CD8-positive, alpha-beta T cell (primary cell): ENCODE measurements at regions of chr3 and their contacts with region 1.

Region 1: GRCh38 chr3:46998121-46998851 is 18.8 kb downstream of the NBEAL2 start:
- DNase-seq: peak; percentile 57 to 87 (median 77)
- ATAC-seq: peak; percentile 66
- H3K4me3 ChIP-seq: no peak overlapping the region
- H3K4me3 Mint-ChIP-seq: no peak overlapping the region
- H3K27ac ChIP-seq: no peak overlapping the region
- H3K27ac Mint-ChIP-seq: peak overlapping the region; percentile 45
- H3K4me1 ChIP-seq: peaks cover 13% of the 10 kb centered on the region
- H3K4me1 Mint-ChIP-seq: peaks cover 17% of the 10 kb centered on the region
- H3K27me3 ChIP-seq: no peaks in the 10 kb centered on the region
- H3K27me3 Mint-ChIP-seq: no peaks in the 10 kb centered on the region
- CTCF ChIP-seq: peak; percentile 80

Region 2: DNA sequence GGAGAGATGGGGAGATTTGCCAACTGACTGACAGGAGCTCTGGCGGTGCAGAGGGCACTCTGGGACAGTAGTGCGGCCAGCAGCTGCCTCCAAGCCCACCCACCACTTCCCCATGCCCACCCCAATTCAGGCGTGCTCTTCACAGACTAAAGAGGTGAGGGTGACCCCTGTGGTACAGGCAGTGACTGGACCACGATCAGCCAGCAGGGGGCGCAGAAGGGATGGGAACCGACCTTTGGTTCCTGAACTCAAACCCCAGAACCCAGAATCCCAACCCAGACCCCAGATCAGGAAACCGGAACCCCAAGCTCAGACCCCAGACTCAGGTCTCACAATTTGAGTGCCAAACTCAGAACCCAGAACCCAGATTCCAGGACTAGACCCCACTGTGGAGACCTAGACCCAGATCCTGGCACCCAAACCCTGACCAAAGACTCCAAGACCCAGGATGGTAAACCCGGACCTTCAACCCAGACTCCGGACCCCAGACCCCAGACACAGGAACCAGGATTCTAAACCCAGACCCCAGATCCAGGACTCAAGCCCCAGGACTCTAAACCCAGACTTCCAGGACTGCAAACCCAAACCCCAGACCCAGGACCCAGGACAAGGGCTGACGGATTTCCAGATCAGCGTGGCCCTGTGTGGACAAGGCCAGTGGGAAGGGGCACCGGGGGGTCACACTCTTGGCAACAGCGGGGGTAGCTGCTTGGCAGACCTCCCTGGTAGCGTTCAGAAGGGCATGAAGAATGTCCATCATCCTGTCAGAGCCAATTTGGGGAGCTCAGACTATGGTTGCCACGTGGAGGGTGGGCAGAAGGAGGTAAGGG is 131.4 kb before region 1 on chr3:
- CTCF ChIA-PET with region 1: interaction called, 11 read pairs
- POLR2A ChIA-PET with region 1: no interaction called
- intact Hi-C with region 1: loop called in 1 of 2 experiments (anchors 1 kb)
- DNase-seq: peak; percentile 57 to 93 (median 79)
- ATAC-seq: peak; percentile 80
- H3K4me3 ChIP-seq: no peak overlapping the region
- H3K4me3 Mint-ChIP-seq: no peak overlapping the region
- H3K27ac ChIP-seq: no peak overlapping the region
- H3K27ac Mint-ChIP-seq: no peak overlapping the region
- H3K4me1 ChIP-seq: no peaks in the 10 kb centered on the region
- H3K4me1 Mint-ChIP-seq: no peaks in the 10 kb centered on the region
- H3K27me3 ChIP-seq: no peaks in the 10 kb centered on the region
- H3K27me3 Mint-ChIP-seq: no peaks in the 10 kb centered on the region
- CTCF ChIP-seq: peak; percentile 75

Region 3: DNA sequence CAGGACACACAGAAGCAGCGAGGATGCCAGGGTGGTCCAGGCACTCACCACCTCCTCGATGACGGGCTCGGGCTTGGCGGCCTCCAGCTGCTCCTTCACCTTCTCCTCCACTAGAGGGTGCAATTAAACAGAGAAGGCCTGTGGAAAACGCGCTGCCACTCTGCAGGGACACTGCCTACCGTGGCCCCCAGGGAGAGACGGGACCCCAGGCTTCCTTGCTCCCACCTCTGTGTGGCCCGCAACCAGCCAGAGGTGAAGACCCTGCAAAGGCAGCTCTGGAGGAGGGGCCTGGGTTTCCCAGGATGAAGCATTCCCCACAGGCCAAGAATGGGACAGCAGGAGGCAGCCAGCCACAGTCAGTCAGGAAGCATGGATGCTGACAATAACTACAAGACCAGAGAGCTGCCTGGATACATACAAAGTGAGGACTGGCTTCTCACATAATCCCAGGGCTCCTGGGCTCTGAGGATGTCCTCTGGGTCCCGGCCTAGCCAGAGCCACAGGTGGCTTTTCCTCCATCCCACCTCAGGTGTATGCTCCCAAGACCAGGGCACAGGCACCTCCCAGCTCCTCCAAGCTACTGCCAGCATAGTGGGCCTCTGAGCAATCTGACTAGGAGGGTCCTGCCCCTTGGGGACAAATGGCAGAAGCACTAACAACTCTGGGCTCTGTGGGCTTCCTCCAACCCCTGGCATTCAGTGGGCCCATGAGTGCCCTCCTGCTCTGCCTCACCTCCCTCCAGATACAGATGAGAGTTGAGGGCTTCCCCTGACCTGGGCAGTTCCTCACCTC is 74.5 kb before region 1 on chr3:
- CTCF ChIA-PET with region 1: interaction called, 63 read pairs
- POLR2A ChIA-PET with region 1: no interaction called
- intact Hi-C with region 1: loop called (anchors 1 kb)
- DNase-seq: peak in 7 of 9 experiments; percentile 16 to 61 (median 48)
- ATAC-seq: peak; percentile 63
- H3K4me3 ChIP-seq: no peak overlapping the region
- H3K4me3 Mint-ChIP-seq: no peak overlapping the region
- H3K27ac ChIP-seq: no peak overlapping the region
- H3K27ac Mint-ChIP-seq: peak overlapping the region; percentile 77
- H3K4me1 ChIP-seq: peaks cover 28% of the 10 kb centered on the region
- H3K4me1 Mint-ChIP-seq: peaks cover 29% of the 10 kb centered on the region
- H3K27me3 ChIP-seq: no peaks in the 10 kb centered on the region
- H3K27me3 Mint-ChIP-seq: no peaks in the 10 kb centered on the region
- CTCF ChIP-seq: peak; percentile 46

Region 4: GRCh38 chr3:46947981-46948791 is 50.1 kb before region 1 on chr3:
- CTCF ChIA-PET with region 1: interaction called, 5 read pairs
- POLR2A ChIA-PET with region 1: no interaction called
- intact Hi-C with region 1: loop called in 1 of 2 experiments (anchors 1 kb)
- DNase-seq: peak; percentile 53 to 91 (median 79)
- ATAC-seq: peak; percentile 76
- H3K4me3 ChIP-seq: no peak overlapping the region
- H3K4me3 Mint-ChIP-seq: peak overlapping the region; percentile 33
- H3K27ac ChIP-seq: peak overlapping the region; percentile 39 to 77
- H3K27ac Mint-ChIP-seq: peak overlapping the region; percentile 97
- H3K4me1 ChIP-seq: peaks cover 78% of the 10 kb centered on the region
- H3K4me1 Mint-ChIP-seq: peaks cover 83% of the 10 kb centered on the region
- H3K27me3 ChIP-seq: no peaks in the 10 kb centered on the region
- H3K27me3 Mint-ChIP-seq: no peaks in the 10 kb centered on the region
- CTCF ChIP-seq: no peak

Region 5: GRCh38 chr3:46976326-46977190 is 21.7 kb before region 1 on chr3 and contains the start of gene CCDC12:
- CTCF ChIA-PET with region 1: interaction called, 20 read pairs
- POLR2A ChIA-PET with region 1: interaction called, 4 read pairs
- intact Hi-C with region 1: loop called in 1 of 2 experiments (anchors 1 kb)
- DNase-seq: peak; percentile 86 to 99 (median 93)
- ATAC-seq: peak; percentile 77
- H3K4me3 ChIP-seq: peak within 1 kb of the TSS; percentile 90 to 91
- H3K4me3 Mint-ChIP-seq: peak within 1 kb of the TSS; percentile 100
- H3K27ac ChIP-seq: peak within 1 kb of the TSS; percentile 75 to 94
- H3K27ac Mint-ChIP-seq: peak within 1 kb of the TSS; percentile 99
- H3K4me1 ChIP-seq: peaks cover 65% of the 10 kb centered on the region
- H3K4me1 Mint-ChIP-seq: peaks cover 69% of the 10 kb centered on the region
- H3K27me3 ChIP-seq: no peaks in the 10 kb centered on the region
- H3K27me3 Mint-ChIP-seq: no peaks in the 10 kb centered on the region
- CTCF ChIP-seq: no peak
- total RNA-seq, gene CCDC12: 99.9 to 107 TPM

Region 6: DNA sequence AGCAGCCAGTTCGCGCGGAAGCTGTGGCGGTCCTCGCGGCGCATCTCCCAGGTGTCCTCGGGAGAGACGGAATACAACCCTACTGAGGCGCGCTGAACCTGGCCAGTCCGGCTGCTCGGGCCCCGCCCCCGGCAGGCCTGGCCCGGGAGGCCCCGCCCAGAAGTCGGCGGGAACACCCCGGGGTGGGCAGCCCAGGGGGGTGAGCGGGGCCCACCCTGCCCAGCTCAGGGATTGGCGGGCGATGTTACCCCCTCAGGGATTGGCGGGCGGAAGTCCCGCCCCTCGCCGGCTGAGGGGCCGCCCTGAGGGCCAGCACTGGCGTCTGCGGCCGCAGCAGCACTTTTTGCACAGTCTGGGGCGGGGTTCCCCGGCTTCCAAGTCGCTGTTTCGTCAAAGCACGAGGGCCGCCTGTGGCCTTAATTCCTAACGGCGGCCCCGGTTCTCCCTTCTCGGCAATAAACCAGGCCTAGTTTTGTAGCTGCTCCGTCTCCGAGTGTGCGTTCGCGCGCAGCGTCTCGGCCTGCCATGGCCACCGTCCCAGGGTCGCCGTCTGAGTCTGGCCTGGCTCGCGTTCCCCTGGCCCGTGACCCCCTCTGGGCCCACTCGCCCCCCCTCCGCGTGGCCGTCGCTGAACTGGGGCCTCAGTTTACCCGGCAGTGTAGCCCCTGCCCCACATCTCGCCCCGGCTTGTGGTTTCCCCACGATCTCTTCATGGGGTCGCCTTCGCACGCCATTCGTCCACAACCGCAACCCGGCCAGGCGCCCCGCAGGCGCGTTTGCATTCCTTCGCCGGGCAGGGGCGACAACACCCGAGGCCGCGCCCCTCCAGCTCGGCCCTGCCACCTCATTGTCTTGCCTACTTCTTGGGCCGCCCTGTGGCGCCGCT is 11.2 kb after region 1 on chr3:
- CTCF ChIA-PET with region 1: interaction called, 23 read pairs
- POLR2A ChIA-PET with region 1: no interaction called
- intact Hi-C with region 1: no loop called
- DNase-seq: peak; percentile 43 to 92 (median 86)
- ATAC-seq: peak; percentile 91
- H3K4me3 ChIP-seq: peak overlapping the region; percentile 52 to 66
- H3K4me3 Mint-ChIP-seq: peak overlapping the region; percentile 70
- H3K27ac ChIP-seq: peak overlapping the region; percentile 56 to 64
- H3K27ac Mint-ChIP-seq: peak overlapping the region; percentile 83
- H3K4me1 ChIP-seq: peaks cover 8% of the 10 kb centered on the region
- H3K4me1 Mint-ChIP-seq: peaks cover 8% of the 10 kb centered on the region
- H3K27me3 ChIP-seq: no peaks in the 10 kb centered on the region
- H3K27me3 Mint-ChIP-seq: no peaks in the 10 kb centered on the region
- CTCF ChIP-seq: no peak